CD8-positive, alpha-beta T cell (primary cell): ENCODE measurements at regions of chr19 and their contacts with region 1.

Region 1: DNA sequence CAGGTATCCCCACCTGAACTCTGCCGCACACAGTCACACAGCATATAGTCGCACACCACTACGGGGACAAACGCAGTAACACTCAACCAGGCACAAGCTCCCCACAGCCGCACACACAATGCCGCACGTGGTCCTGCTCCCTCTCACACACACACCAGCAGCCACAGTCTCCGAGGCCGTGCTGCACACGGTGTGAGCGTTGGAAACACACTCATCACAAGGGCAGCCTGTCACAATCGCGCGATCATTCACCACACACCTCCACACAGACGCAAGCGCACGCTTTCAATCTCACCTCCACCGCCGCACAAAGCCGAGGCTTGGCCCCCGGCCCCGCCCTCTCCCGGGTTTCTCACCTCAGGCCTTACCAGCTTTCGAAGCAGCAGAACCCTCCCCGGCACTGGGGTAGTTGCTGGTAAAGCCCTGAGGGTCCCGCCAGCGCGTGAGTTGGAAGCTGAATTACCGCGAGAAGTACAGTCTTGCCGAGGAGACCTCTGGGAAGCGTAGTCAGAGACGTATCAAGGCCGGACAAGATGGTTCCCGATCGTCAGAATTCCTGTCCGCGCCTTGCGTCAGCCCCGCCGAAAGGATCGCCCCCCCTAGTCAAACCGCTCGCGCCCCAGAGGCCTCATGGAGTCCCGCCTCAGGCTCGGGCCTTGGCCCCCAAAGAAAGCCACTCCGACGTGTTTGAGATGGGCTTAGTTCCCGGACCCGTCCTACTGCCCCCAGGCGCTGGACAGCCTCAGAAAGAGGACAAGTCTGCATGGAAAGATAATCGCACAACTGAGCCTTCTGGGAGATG is at the start of gene ZNF566:
- DNase-seq: peak; percentile 84 to 98 (median 91)
- ATAC-seq: peak; percentile 88
- H3K4me3 ChIP-seq: peak within 1 kb of the TSS; percentile 84 to 93
- H3K4me3 Mint-ChIP-seq: peak within 1 kb of the TSS; percentile 99
- H3K27ac ChIP-seq: peak within 1 kb of the TSS; percentile 79 to 96
- H3K27ac Mint-ChIP-seq: peak within 1 kb of the TSS; percentile 96
- H3K4me1 ChIP-seq: peaks cover 6% of the 10 kb centered on the region
- H3K4me1 Mint-ChIP-seq: peaks cover 33% of the 10 kb centered on the region
- H3K27me3 ChIP-seq: no peaks in the 10 kb centered on the region
- H3K27me3 Mint-ChIP-seq: no peaks in the 10 kb centered on the region
- CTCF ChIP-seq: no peak
- total RNA-seq, gene ZNF566: 5.8 to 7.0 TPM

Region 2: DNA sequence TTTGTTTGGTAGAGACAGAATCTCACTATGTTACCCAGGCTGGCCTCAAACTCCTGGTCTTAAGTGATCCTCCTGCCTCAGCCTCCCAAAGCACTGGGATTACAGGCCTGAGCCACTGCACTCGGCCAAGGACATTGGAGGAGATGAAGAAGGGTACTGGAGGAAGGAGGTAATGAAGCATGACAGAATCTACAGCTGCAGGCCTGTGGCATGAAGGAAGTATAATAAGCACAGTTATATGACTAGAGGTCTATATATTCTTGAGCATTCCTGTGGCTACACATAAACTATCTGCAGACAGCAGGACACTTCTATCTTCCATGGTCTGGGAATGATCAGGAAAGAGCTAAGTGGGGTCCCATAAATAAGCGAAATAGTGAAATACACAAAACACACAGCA is 293.1 kb before region 1 on chr19:
- CTCF ChIA-PET with region 1: no interaction called
- POLR2A ChIA-PET with region 1: no interaction called
- intact Hi-C with region 1: loop called in 1 of 2 experiments (anchors 2 kb)
- DNase-seq: no peak
- ATAC-seq: no peak
- H3K4me3 ChIP-seq: no peak overlapping the region
- H3K4me3 Mint-ChIP-seq: no peak overlapping the region
- H3K27ac ChIP-seq: no peak overlapping the region
- H3K27ac Mint-ChIP-seq: no peak overlapping the region
- H3K4me1 ChIP-seq: no peaks in the 10 kb centered on the region
- H3K4me1 Mint-ChIP-seq: no peaks in the 10 kb centered on the region
- H3K27me3 ChIP-seq: no peaks in the 10 kb centered on the region
- H3K27me3 Mint-ChIP-seq: no peaks in the 10 kb centered on the region
- CTCF ChIP-seq: no peak

Region 3: DNA sequence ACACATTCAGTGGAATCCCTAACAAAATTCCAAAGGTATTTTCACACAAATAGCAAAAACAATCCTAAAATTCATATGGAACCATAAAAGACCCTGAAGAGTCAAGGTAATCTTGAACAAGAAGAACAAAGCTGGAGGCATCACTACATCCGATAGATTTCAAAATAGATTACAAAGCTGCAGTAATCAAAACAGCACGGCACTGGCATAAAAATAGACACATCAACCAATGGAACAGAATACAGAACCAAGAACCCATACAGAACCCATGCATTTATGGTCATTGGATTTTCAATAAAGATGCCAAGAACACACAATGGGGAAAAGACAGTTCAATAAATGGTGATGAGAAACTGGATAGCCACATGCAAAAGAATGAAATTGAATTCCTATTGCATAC is 32.5 kb before region 1 on chr19:
- CTCF ChIA-PET with region 1: no interaction called
- POLR2A ChIA-PET with region 1: no interaction called
- intact Hi-C with region 1: no loop called
- DNase-seq: no peak
- ATAC-seq: no peak
- H3K4me3 ChIP-seq: no peak overlapping the region
- H3K4me3 Mint-ChIP-seq: no peak overlapping the region
- H3K27ac ChIP-seq: no peak overlapping the region
- H3K27ac Mint-ChIP-seq: no peak overlapping the region
- H3K4me1 ChIP-seq: no peaks in the 10 kb centered on the region
- H3K4me1 Mint-ChIP-seq: no peaks in the 10 kb centered on the region
- H3K27me3 ChIP-seq: no peaks in the 10 kb centered on the region
- H3K27me3 Mint-ChIP-seq: no peaks in the 10 kb centered on the region
- CTCF ChIP-seq: no peak

Region 4: GRCh38 chr19:36528194-36528920 is 39.0 kb after region 1 on chr19 and contains the start of gene ZNF260:
- CTCF ChIA-PET with region 1: no interaction called
- POLR2A ChIA-PET with region 1: interaction called, 22 read pairs
- intact Hi-C with region 1: loop called (anchors 1 kb)
- DNase-seq: peak; percentile 77 to 96 (median 92)
- ATAC-seq: peak; percentile 90
- H3K4me3 ChIP-seq: peak within 1 kb of the TSS; percentile 64 to 85
- H3K4me3 Mint-ChIP-seq: peak within 1 kb of the TSS; percentile 99
- H3K27ac ChIP-seq: peak within 1 kb of the TSS; percentile 52 to 84
- H3K27ac Mint-ChIP-seq: peak within 1 kb of the TSS; percentile 96
- H3K4me1 ChIP-seq: peaks cover 21% of the 10 kb centered on the region
- H3K4me1 Mint-ChIP-seq: peaks cover 28% of the 10 kb centered on the region
- H3K27me3 ChIP-seq: no peaks in the 10 kb centered on the region
- H3K27me3 Mint-ChIP-seq: no peaks in the 10 kb centered on the region
- CTCF ChIP-seq: no peak
- total RNA-seq, gene ZNF260: 2.8 to 4.6 TPM

Region 5: DNA sequence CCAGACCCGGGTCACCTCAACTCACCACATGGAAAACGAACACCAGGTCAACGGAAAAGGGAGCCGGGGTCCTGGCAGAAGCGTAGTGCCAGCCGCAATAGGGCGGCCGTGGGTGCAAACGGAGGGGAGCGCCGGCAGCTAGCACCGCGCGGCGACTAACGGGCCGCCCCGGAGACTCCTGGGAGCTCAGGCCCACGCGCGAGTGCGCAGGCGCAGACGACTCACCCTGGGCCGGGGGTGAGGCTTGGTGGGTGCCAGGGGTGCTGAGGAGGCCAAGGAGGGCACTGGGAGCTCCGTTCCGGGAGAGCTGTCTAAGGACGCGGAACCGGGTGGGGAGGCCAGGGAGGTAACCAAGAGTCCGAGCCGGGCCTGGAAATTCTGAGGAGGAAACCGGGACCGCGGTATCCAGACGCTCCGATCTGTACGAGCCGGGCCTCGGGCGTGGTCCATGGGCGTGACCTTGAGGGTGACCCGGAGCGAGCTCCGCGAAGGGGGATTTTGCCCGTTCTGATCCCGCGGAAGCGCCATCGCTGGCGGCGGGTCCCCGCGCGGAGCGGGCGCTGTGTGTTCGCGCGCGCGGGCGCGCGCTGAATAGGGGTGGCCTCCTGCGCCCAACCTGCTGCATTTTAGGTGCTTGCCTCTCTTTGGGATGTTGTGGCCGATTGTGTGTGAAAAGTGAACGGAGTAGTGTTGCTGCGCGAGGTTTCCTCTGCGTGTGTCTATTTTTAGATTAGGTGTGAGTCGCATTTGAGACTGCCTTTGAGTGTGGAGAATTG is 116.0 kb after region 1 on chr19 and contains the start of gene ZNF382:
- CTCF ChIA-PET with region 1: no interaction called
- POLR2A ChIA-PET with region 1: interaction called, 3 read pairs
- intact Hi-C with region 1: loop called (anchors 1 kb)
- DNase-seq: peak; percentile 72 to 91 (median 86)
- ATAC-seq: peak; percentile 65
- H3K4me3 ChIP-seq: peak within 1 kb of the TSS; percentile 89 to 95
- H3K4me3 Mint-ChIP-seq: peak within 1 kb of the TSS; percentile 91
- H3K27ac ChIP-seq: peak within 1 kb of the TSS; percentile 89 to 98
- H3K27ac Mint-ChIP-seq: peak within 1 kb of the TSS; percentile 97
- H3K4me1 ChIP-seq: peaks cover 11% of the 10 kb centered on the region
- H3K4me1 Mint-ChIP-seq: peaks cover 29% of the 10 kb centered on the region
- H3K27me3 ChIP-seq: no peaks in the 10 kb centered on the region
- H3K27me3 Mint-ChIP-seq: no peaks in the 10 kb centered on the region
- CTCF ChIP-seq: no peak
- total RNA-seq, gene ZNF382: 4.6 to 4.7 TPM

Region 6: DNA sequence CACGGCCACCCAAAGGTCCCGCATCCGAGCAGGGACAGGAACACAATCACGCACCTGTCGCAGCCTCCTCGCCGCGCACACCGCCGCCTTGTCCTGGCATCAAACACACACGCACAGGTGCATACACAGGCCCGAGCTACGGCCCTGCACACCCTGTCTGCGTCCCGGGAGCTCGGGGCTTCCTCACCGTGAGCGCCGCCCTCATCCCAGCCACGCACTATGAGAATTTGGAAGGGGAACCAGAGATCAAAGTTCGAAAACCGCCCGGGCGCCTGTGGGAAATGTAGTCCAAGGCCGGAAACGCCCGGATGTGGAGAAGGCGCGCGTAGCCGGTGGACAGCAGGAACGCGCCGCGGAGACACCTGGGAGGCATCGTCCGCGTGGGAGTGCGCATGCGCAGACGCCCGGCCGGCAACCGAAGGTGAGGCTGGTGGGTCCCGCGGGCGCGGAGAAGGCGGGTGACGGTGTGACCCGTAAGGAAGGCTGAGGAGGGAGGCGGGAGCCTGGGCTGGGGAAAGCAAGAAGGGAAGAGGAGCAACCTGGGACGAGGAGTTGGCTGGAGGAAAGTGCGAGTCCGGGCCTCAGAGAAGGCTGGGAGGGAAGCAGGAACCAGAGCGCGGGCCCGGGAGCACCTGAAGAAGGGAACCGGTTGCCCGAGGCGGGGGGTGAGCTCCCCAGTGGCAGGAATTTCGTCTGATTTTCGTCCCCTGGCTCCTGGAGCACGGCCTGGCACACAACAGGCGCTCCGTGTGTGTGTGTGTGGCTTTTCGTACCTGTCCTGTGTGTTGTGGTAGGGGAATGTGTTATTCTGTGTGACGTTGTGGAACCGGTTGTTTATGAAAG is 198.1 kb after region 1 on chr19 and contains the start of gene ZNF567:
- CTCF ChIA-PET with region 1: no interaction called
- POLR2A ChIA-PET with region 1: interaction called, 3 read pairs
- intact Hi-C with region 1: loop called in 1 of 2 experiments (anchors 1 kb)
- DNase-seq: peak; percentile 91 to 99 (median 98)
- ATAC-seq: peak; percentile 91
- H3K4me3 ChIP-seq: peak within 1 kb of the TSS; percentile 82 to 87
- H3K4me3 Mint-ChIP-seq: peak within 1 kb of the TSS; percentile 99
- H3K27ac ChIP-seq: peak within 1 kb of the TSS; percentile 71 to 81
- H3K27ac Mint-ChIP-seq: peak within 1 kb of the TSS; percentile 96
- H3K4me1 ChIP-seq: peaks cover 18% of the 10 kb centered on the region
- H3K4me1 Mint-ChIP-seq: peaks cover 35% of the 10 kb centered on the region
- H3K27me3 ChIP-seq: no peaks in the 10 kb centered on the region
- H3K27me3 Mint-ChIP-seq: no peaks in the 10 kb centered on the region
- CTCF ChIP-seq: no peak
- total RNA-seq, gene ZNF567: 10.7 to 11.1 TPM

Region 7: GRCh38 chr19:36837906-36838783 is 348.8 kb after region 1 on chr19 and contains the start of gene ZNF790:
- CTCF ChIA-PET with region 1: no interaction called
- POLR2A ChIA-PET with region 1: interaction called, 6 read pairs
- intact Hi-C with region 1: loop called in 1 of 2 experiments (anchors 1 kb)
- DNase-seq: peak; percentile 62 to 92 (median 81)
- ATAC-seq: peak; percentile 87
- H3K4me3 ChIP-seq: peak within 1 kb of the TSS; percentile 86 to 91
- H3K4me3 Mint-ChIP-seq: no peak within 1 kb of the TSS
- H3K27ac ChIP-seq: peak within 1 kb of the TSS; percentile 88 to 97
- H3K27ac Mint-ChIP-seq: no peak within 1 kb of the TSS
- H3K4me1 ChIP-seq: peaks cover 17% of the 10 kb centered on the region
- H3K4me1 Mint-ChIP-seq: peaks cover 21% of the 10 kb centered on the region
- H3K27me3 ChIP-seq: no peaks in the 10 kb centered on the region
- H3K27me3 Mint-ChIP-seq: no peaks in the 10 kb centered on the region
- CTCF ChIP-seq: no peak
- total RNA-seq, gene ZNF790: 2.1 to 3.6 TPM

Region 8: DNA sequence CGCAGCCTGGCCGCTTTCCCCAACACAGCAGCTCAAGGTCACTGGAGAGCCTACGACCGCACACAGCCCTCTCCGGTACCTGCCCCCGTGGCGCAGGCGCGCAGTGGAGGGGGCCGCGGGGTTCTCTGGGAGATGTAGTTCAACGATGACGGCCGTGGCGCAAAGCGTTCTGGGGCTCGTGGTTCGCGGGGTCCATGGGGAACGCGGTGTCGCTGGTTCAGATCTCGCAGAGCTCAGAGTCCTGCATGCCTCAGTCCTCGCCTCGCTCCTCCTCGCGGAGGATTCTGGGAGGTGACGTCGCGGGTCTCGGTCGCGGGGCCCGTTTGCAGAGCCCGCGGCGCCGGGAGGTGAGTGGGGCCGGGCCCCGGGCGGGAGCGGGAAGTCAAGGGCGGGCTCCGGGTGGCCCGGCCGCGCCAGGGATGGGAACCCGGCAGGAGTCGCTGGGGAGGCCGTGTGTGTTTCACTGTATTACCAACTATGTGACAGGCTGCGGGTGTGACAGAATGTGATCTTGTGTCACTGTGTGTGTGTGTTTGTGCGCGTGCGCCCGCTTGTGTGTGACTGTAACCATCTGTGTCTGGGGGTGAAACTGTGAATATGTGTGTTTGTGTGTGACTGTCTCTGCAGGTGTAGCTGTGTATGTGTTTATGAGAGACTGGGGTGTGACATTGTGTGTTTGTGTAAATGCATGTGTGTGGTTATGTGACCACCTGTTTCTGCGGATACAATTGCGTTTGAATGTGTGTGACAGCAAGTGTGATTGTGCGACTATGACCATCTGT is 881.8 kb after region 1 on chr19 and contains the start of gene ZNF527:
- CTCF ChIA-PET with region 1: no interaction called
- POLR2A ChIA-PET with region 1: no interaction called
- intact Hi-C with region 1: loop called in 1 of 2 experiments (anchors 2 kb)
- DNase-seq: peak; percentile 94 to 98 (median 97)
- ATAC-seq: peak; percentile 92
- H3K4me3 ChIP-seq: peak within 1 kb of the TSS; percentile 80 to 95
- H3K4me3 Mint-ChIP-seq: peak within 1 kb of the TSS; percentile 99
- H3K27ac ChIP-seq: peak within 1 kb of the TSS; percentile 82 to 90
- H3K27ac Mint-ChIP-seq: peak within 1 kb of the TSS; percentile 96
- H3K4me1 ChIP-seq: peaks cover 7% of the 10 kb centered on the region
- H3K4me1 Mint-ChIP-seq: peaks cover 20% of the 10 kb centered on the region
- H3K27me3 ChIP-seq: no peaks in the 10 kb centered on the region
- H3K27me3 Mint-ChIP-seq: no peaks in the 10 kb centered on the region
- CTCF ChIP-seq: no peak
- total RNA-seq, gene ZNF527: 12.9 to 14.2 TPM